HEK293 (cell line): ENCODE measurements at regions of chr6 and their contacts with region 1.

Region 1: GRCh38 chr6:3977875-3978711 is 100.8 kb downstream of the FAM217A start:
- H3K4me3 ChIP-seq: no peak overlapping the region
- H3K27ac ChIP-seq: no peak overlapping the region
- H3K4me1 ChIP-seq: no peaks in the 10 kb centered on the region
- CTCF ChIP-seq: peak; percentile 89

Region 2: DNA sequence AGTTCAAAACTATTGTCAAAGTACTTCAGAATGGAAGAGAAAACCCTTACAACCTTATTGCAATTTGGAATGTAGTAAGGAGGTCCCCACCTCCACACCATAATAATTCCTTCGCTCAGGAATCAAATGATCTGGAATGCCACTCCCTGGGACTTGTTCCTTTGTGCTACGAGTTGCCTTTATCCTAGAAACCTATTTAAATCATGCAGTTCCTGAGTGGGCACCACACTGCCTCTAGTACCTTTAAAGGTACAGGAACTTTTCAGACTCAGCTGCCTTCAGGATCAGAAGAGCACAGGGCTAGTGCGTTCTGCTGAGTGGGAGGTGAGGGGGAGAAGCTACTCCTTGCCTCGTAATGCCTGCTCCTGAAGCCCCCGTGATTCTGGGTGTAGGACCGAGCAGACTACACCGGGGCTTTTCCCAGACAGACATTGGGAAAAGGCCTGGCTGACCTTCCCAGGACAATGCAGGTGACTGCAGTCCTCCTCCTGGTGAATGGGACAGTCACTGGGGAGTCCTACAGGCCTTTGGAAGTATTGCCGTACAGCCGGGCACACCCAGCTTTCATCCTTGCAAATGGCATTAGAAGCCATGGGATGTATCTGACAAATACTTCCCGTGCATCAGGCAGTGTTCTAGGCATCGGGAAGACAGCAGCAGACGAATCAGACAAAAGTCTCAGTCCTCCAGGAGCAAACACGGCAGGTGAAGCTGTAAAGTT is 738.8 kb before region 1 on chr6:
- CTCF ChIA-PET with region 1: no interaction called
- POLR2A ChIA-PET with region 1: no interaction called
- H3K4me3 ChIP-seq: no peak overlapping the region
- H3K27ac ChIP-seq: no peak overlapping the region
- H3K4me1 ChIP-seq: no peaks in the 10 kb centered on the region
- CTCF ChIP-seq: no peak

Region 3: GRCh38 chr6:3748208-3749066 is 229.7 kb before region 1 on chr6:
- CTCF ChIA-PET with region 1: interaction called, 107 read pairs
- POLR2A ChIA-PET with region 1: interaction called, 6 read pairs
- H3K4me3 ChIP-seq: no peak overlapping the region
- H3K27ac ChIP-seq: no peak overlapping the region
- H3K4me1 ChIP-seq: peaks cover 3% of the 10 kb centered on the region; the same call in 1 of the 2 replicates
- CTCF ChIP-seq: peak; percentile 76

Region 4: GRCh38 chr6:3841711-3842565 is 136.2 kb before region 1 on chr6:
- CTCF ChIA-PET with region 1: interaction called, 91 read pairs
- POLR2A ChIA-PET with region 1: no interaction called
- H3K4me3 ChIP-seq: no peak overlapping the region
- H3K27ac ChIP-seq: no peak overlapping the region
- H3K4me1 ChIP-seq: peaks cover 6% of the 10 kb centered on the region
- CTCF ChIP-seq: no peak

Region 5: GRCh38 chr6:3929281-3929798 is 48.8 kb before region 1 on chr6:
- CTCF ChIA-PET with region 1: interaction called, 38 read pairs
- POLR2A ChIA-PET with region 1: no interaction called
- H3K4me3 ChIP-seq: no peak overlapping the region
- H3K27ac ChIP-seq: no peak overlapping the region
- H3K4me1 ChIP-seq: no peaks in the 10 kb centered on the region
- CTCF ChIP-seq: no peak

Region 6: DNA sequence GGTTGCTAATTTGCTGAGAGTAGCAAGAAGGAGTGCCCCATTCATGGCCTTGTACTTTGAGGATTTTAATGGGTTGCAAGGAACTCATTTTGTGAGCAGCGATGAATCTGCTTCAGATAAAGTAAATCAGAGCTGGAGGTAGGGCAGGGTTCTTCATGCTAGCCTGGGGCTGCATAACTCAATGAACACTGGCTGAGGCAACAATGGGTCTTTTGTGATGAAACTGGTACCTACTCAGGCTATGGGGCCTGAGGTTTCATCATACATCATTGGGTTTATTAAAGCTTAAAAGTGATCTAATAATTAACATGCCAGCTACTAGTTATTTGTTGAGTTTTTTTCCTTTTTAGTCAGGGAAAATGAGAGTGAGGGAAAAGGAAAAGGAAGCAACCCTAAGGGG is 22.0 kb before region 1 on chr6:
- CTCF ChIA-PET with region 1: interaction called, 21 read pairs
- POLR2A ChIA-PET with region 1: no interaction called
- H3K4me3 ChIP-seq: no peak overlapping the region
- H3K27ac ChIP-seq: no peak overlapping the region
- H3K4me1 ChIP-seq: no peaks in the 10 kb centered on the region; the same call in 1 of the 2 replicates
- CTCF ChIP-seq: no peak

Region 7: DNA sequence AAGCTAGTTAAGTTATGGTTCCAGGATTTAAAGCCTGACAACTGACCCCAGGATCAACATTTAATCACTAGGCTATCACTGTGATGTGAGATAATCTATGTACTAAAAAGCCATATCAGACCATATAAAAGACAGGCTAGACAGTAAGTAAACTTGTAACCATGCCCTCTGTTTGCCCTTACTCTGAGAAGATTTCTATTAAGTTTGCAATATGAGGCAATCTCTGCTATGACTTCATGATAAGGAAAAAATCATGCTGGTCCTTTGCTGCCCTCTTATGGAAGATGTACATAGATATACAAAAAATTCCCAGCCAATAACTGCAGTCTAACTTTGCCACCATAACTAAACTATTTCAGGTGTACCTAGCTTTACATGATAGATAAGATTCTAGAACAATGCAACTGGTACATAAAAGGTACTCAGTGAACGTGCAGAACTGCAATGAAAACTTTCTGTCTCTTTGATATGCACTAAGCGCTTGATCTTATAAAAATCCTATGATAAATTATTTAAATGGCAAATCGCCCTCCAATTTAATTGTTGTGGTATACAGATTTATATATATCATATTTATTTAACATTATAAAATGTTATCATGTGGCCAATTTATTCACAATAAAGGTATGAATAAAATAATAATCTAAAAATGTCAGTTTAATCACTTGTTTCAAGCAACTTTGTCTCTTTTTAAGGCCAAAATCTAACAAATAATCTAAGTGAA is 30.4 kb after region 1 on chr6:
- CTCF ChIA-PET with region 1: interaction called, 23 read pairs
- POLR2A ChIA-PET with region 1: no interaction called
- H3K4me3 ChIP-seq: no peak overlapping the region
- H3K27ac ChIP-seq: no peak overlapping the region
- H3K4me1 ChIP-seq: peaks cover 12% of the 10 kb centered on the region
- CTCF ChIP-seq: peak; percentile 32; the same call in 1 of the 2 replicates

Region 8: DNA sequence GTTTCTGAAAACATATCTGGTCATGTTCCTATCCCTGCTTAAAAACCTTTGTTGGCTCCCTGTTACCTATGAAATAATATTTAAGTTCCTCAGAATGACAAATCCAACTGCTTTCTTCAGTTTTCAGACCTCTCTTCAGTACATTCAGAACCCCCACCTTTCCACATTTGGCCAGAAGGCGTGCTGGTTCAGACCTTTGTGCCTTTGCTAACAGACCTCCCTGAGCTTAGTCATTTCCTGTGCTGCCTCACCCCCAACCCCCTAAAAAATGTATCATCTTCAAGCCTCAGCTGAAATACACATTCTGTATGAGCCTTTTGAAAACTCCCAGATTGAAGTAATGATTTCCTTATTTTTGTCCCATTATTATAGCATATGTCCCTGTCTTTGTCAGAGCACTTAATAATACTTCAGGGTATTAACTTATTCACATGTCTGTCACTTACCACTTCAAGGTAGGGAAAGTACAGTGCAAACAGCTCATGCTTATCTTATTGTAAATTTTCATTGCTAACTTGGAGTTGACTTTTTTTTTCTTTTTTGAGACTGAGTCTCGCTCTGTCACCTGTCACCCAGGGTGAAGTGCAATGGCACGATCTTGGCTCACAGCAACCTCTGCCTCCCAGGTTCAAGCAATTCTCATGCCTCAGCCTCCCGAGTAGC is 81.2 kb after region 1 on chr6:
- CTCF ChIA-PET with region 1: no interaction called
- POLR2A ChIA-PET with region 1: no interaction called
- H3K4me3 ChIP-seq: no peak overlapping the region
- H3K27ac ChIP-seq: no peak overlapping the region
- H3K4me1 ChIP-seq: peaks cover 7% of the 10 kb centered on the region; the same call in 1 of the 2 replicates
- CTCF ChIP-seq: no peak